ENCODE measurements at regions of chr15 and their contacts with region 1.

Region 1: GRCh38 chr15:72231066-72231846 is at the start of gene PKM:
- DNase-seq: peak; percentile 80 to 98 (median 89)
- ATAC-seq: peak; percentile 32
- H3K4me3 ChIP-seq: peak within 1 kb of the TSS; percentile 96
- H3K4me3 Mint-ChIP-seq: peak within 1 kb of the TSS; percentile 98
- H3K27ac ChIP-seq: peak within 1 kb of the TSS; percentile 78 to 92
- H3K27ac Mint-ChIP-seq: peak within 1 kb of the TSS; percentile 93
- H3K4me1 ChIP-seq: peaks cover 52% of the 10 kb centered on the region
- H3K4me1 Mint-ChIP-seq: peaks cover 58% of the 10 kb centered on the region
- H3K27me3 ChIP-seq: no peaks in the 10 kb centered on the region
- H3K27me3 Mint-ChIP-seq: no peaks in the 10 kb centered on the region
- CTCF ChIP-seq: no peak
- total RNA-seq, gene PKM: 202 to 203 TPM

Region 2: DNA sequence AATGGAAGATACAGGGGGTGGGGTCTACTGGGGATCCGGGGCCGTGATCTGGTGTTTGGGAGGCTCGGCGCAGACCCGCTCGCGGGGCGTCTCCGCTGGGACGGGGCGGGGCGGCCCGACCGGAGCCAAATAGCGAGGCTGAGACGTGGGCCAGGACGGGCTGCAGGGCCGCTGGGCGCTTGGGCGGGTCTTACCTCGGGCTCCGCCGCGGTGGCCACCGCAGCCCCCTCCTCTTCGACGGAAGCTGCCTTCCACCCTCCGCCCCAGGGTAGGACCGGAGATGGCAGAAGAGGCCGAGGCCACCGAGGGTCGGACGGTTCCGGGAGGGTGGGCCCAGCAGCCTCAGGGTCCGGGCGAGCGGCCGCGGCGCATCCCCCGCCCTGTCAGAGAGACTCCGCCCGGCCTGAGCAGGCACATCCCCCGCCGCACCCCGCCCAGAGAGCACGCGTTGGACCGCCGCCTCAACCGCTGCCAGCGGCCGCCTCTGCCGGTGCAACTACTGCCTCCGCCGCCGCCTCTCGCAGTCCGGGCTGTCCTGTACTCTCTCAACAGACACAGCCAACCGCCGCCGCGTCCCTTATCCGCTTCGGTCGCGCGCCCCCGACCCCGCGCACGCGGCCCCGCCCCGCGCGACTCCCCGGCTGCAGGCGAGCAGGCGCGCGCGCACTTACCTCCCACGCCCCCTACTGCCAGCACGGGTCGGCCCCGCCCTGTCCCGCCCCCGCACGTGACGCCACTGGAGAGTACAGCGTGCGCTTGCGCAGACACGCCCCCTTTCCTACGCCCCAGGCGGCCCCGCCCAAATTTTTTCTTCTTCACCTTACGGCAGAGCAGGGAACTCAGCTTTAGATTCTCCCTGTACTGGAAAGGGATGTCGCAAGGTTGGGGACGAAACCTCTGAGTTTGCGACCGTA is 113.5 kb before region 1 on chr15 and contains the start of gene MYO9A:
- CTCF ChIA-PET with region 1: no interaction called
- POLR2A ChIA-PET with region 1: interaction called, 8 read pairs
- intact Hi-C with region 1: loop called (anchors 2 kb)
- DNase-seq: peak; percentile 97 to 99 (median 99)
- ATAC-seq: peak; percentile 79
- H3K4me3 ChIP-seq: peak within 1 kb of the TSS; percentile 74
- H3K4me3 Mint-ChIP-seq: peak within 1 kb of the TSS; percentile 98
- H3K27ac ChIP-seq: peak within 1 kb of the TSS; percentile 91 to 92
- H3K27ac Mint-ChIP-seq: peak within 1 kb of the TSS; percentile 97
- H3K4me1 ChIP-seq: peaks cover 15% of the 10 kb centered on the region
- H3K4me1 Mint-ChIP-seq: peaks cover 60% of the 10 kb centered on the region
- H3K27me3 ChIP-seq: no peaks in the 10 kb centered on the region
- H3K27me3 Mint-ChIP-seq: no peaks in the 10 kb centered on the region
- CTCF ChIP-seq: no peak
- total RNA-seq, gene MYO9A: 23.4 to 29.1 TPM

Region 3: DNA sequence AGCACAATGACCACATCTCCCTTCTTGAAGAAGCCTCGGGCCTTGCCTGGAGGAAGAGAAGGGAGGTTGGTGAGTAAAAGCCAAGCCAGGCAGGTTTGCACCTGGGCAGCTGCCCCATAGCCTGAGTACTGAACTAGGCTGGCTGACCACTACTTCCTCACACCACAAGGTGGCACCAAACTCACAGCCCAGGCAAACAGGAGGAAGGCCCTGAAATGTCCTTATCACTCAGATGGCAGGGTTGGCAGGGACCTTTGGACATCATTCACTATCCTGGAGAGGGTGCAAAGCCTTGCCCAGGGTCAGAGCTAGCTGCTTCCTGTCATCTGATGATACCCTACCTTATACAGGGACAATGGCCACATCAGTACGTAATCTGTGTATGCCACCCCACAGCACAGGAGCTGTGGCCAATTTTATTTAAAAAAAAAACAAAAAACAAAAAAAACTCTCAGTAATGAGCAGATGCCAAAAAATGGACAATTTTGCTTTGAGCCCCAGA is 31.5 kb before region 1 on chr15:
- CTCF ChIA-PET with region 1: interaction called, 14 read pairs
- POLR2A ChIA-PET with region 1: interaction called, 29 read pairs
- intact Hi-C with region 1: loop called in 1 of 2 experiments (anchors 1 kb)
- DNase-seq: peak; percentile 61 to 86 (median 70)
- ATAC-seq: peak; percentile 87
- H3K4me3 ChIP-seq: no peak overlapping the region
- H3K4me3 Mint-ChIP-seq: peak overlapping the region; percentile 4
- H3K27ac ChIP-seq: no peak overlapping the region
- H3K27ac Mint-ChIP-seq: no peak overlapping the region
- H3K4me1 ChIP-seq: peaks cover 15% of the 10 kb centered on the region
- H3K4me1 Mint-ChIP-seq: peaks cover 9% of the 10 kb centered on the region
- H3K27me3 ChIP-seq: peaks cover 11 to 13% of the 10 kb centered on the region in 2 experiments
- H3K27me3 Mint-ChIP-seq: peaks cover 17% of the 10 kb centered on the region
- CTCF ChIP-seq: peak; percentile 91

Region 4: DNA sequence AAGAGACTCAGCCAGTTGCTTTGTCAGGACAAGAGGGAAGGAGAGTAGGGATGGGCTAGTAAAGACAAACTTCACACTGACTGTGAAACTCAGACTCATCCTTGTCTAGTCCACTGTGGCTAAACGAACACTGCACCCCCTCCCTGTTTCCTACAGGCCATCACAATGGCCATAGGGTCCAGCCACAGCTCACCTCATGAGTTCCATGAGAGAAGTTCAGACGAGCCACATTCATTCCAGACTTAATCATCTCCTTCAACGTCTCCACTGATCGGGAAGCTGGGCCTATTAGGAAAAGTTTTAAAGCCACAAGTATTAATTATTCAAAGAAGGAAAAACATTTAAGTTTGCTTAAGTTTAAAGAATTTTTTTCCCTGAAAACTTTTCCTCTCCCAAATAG is 14.0 kb before region 1 on chr15:
- CTCF ChIA-PET with region 1: interaction called, 16 read pairs
- POLR2A ChIA-PET with region 1: interaction called, 8 read pairs
- intact Hi-C with region 1: no loop called
- DNase-seq: no peak
- ATAC-seq: no peak
- H3K4me3 ChIP-seq: no peak overlapping the region
- H3K4me3 Mint-ChIP-seq: no peak overlapping the region
- H3K27ac ChIP-seq: no peak overlapping the region
- H3K27ac Mint-ChIP-seq: no peak overlapping the region
- H3K4me1 ChIP-seq: peaks cover 13% of the 10 kb centered on the region
- H3K4me1 Mint-ChIP-seq: peaks cover 29% of the 10 kb centered on the region
- H3K27me3 ChIP-seq: no peaks in the 10 kb centered on the region
- H3K27me3 Mint-ChIP-seq: no peaks in the 10 kb centered on the region
- CTCF ChIP-seq: no peak

Region 5: DNA sequence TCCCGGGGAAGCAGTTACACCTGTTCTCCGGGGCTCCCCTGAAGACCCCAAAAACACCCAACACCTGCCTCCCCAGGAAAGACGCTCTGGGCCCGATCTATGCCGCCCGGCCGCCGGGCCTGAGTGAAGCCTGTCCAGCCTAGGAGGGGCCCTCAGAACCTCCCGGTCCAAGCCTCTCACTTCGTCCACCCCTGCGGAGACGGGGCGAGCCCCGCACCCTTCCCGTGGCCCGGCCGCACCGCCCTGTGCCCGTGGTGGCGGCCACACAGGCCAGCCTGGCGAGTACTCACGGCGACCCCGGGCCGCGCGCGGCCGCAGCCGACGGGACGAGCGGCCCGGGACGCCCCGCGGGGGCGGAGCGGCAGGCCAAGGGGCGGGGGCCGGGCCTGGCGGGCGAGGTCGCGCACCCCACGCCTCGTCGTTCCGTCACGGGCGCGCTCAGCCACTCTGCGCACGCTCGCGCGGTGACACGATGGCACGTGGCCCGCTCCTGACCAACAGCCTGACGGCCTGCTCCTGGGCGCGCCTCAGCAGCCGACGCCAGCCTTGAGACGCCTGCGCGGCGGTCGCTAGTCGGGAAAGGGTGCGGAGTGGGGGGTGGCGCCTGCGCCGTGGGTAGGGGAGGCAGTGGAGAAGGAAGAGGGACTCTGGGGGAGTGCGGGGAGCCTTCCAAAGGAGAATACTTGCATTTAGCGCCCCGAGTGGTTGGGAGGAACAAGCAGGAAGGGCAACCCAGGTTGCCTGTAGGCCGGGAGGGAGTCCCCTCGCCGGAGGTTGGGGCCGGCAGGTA is 41.2 kb after region 1 on chr15 and contains the start of gene PARP6:
- CTCF ChIA-PET with region 1: interaction called, 15 read pairs
- POLR2A ChIA-PET with region 1: interaction called, 22 read pairs
- intact Hi-C with region 1: loop called (anchors 1 to 2 kb)
- DNase-seq: peak; percentile 95 to 100 (median 98)
- ATAC-seq: peak; percentile 94
- H3K4me3 ChIP-seq: peak within 1 kb of the TSS; percentile 89
- H3K4me3 Mint-ChIP-seq: peak within 1 kb of the TSS; percentile 92
- H3K27ac ChIP-seq: peak within 1 kb of the TSS; percentile 76 to 79
- H3K27ac Mint-ChIP-seq: peak within 1 kb of the TSS; percentile 93
- H3K4me1 ChIP-seq: peaks cover 25% of the 10 kb centered on the region
- H3K4me1 Mint-ChIP-seq: peaks cover 47% of the 10 kb centered on the region
- H3K27me3 ChIP-seq: no peaks in the 10 kb centered on the region
- H3K27me3 Mint-ChIP-seq: no peaks in the 10 kb centered on the region
- CTCF ChIP-seq: peak; percentile 80
- total RNA-seq, gene PARP6: 128 to 133 TPM

Region 6: DNA sequence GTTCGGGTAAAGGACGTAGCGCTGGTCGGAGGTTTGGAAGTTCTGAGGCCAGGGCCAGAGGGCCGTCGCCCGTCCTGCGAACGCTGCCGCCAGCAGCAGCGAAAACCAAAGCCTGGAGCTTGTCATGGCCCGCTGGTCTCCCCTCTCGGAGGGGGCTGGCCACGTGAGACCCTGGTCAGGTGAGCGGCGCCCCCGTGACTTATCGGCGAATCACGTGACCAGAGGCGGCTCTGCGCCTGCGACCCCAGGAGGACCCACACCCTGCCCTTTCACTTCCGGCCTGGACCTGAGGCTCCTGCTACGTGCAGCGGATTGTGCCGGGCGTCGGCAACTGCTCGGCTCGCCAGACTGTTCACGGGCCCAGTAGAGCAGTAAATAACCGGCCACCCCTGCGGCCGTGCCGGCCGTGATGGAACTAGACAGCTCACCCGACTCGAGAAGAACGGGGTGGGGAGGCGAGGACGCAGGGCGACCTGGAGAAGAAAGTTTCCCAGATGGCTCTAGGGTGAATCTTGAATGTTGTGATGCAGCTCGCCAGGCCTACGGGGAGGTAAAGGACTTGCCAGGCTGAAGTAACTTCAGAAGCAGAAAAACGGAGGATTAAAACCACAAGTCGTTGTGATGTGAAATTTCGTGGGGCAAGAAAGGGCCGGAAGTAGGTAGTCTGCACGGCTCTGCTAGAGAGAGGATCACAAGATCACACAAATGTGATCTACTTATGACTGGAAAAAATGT is 144.8 kb after region 1 on chr15 and contains the start of gene HEXA:
- CTCF ChIA-PET with region 1: interaction called, 4 read pairs
- POLR2A ChIA-PET with region 1: interaction called, 19 read pairs
- intact Hi-C with region 1: loop called (anchors 5 to 10 kb)
- DNase-seq: peak; percentile 89 to 97 (median 94)
- ATAC-seq: peak; percentile 68
- H3K4me3 ChIP-seq: peak within 1 kb of the TSS; percentile 87
- H3K4me3 Mint-ChIP-seq: peak within 1 kb of the TSS; percentile 94
- H3K27ac ChIP-seq: peak within 1 kb of the TSS; percentile 76 to 86
- H3K27ac Mint-ChIP-seq: peak within 1 kb of the TSS; percentile 96
- H3K4me1 ChIP-seq: peaks cover 28% of the 10 kb centered on the region
- H3K4me1 Mint-ChIP-seq: peaks cover 57% of the 10 kb centered on the region
- H3K27me3 ChIP-seq: no peaks in the 10 kb centered on the region
- H3K27me3 Mint-ChIP-seq: peaks cover 9% of the 10 kb centered on the region
- CTCF ChIP-seq: no peak
- total RNA-seq, gene HEXA: 66.3 to 66.9 TPM

Region 7: GRCh38 chr15:72685925-72686794 is 454.9 kb after region 1 on chr15 and contains the starts of genes BBS4 and HIGD2B:
- CTCF ChIA-PET with region 1: no interaction called
- POLR2A ChIA-PET with region 1: interaction called, 4 read pairs
- intact Hi-C with region 1: loop called in 1 of 2 experiments (anchors 5 kb)
- DNase-seq: peak; percentile 71 to 93 (median 82)
- ATAC-seq: peak; percentile 92
- H3K4me3 ChIP-seq: peak within 1 kb of the TSS; percentile 75
- H3K4me3 Mint-ChIP-seq: peak within 1 kb of the TSS; percentile 94
- H3K27ac ChIP-seq: peak within 1 kb of the TSS; percentile 77 to 81
- H3K27ac Mint-ChIP-seq: peak within 1 kb of the TSS; percentile 96
- H3K4me1 ChIP-seq: peaks cover 17% of the 10 kb centered on the region
- H3K4me1 Mint-ChIP-seq: peaks cover 18% of the 10 kb centered on the region
- H3K27me3 ChIP-seq: no peaks in the 10 kb centered on the region
- H3K27me3 Mint-ChIP-seq: no peaks in the 10 kb centered on the region
- CTCF ChIP-seq: no peak
- total RNA-seq, gene BBS4: 8.6 to 12.8 TPM
- total RNA-seq, gene HIGD2B: 0.28 TPM in 1 of 2 experiments, not detected in the other

Region 8: GRCh38 chr15:72770673-72771328 is 539.5 kb after region 1 on chr15:
- CTCF ChIA-PET with region 1: no interaction called
- POLR2A ChIA-PET with region 1: no interaction called
- intact Hi-C with region 1: no loop called
- DNase-seq: no peak
- ATAC-seq: no peak
- H3K4me3 ChIP-seq: no peak overlapping the region
- H3K4me3 Mint-ChIP-seq: no peak overlapping the region
- H3K27ac ChIP-seq: no peak overlapping the region
- H3K27ac Mint-ChIP-seq: no peak overlapping the region
- H3K4me1 ChIP-seq: no peaks in the 10 kb centered on the region
- H3K4me1 Mint-ChIP-seq: peaks cover 27% of the 10 kb centered on the region
- H3K27me3 ChIP-seq: no peaks in the 10 kb centered on the region
- H3K27me3 Mint-ChIP-seq: no peaks in the 10 kb centered on the region
- CTCF ChIP-seq: no peak

Region 9: GRCh38 chr15:73082812-73083211 is 851.6 kb after region 1 on chr15:
- CTCF ChIA-PET with region 1: no interaction called
- POLR2A ChIA-PET with region 1: no interaction called
- intact Hi-C with region 1: no loop called
- DNase-seq: no peak
- ATAC-seq: no peak
- H3K4me3 ChIP-seq: no peak overlapping the region
- H3K4me3 Mint-ChIP-seq: no peak overlapping the region
- H3K27ac ChIP-seq: no peak overlapping the region
- H3K27ac Mint-ChIP-seq: no peak overlapping the region
- H3K4me1 ChIP-seq: no peaks in the 10 kb centered on the region
- H3K4me1 Mint-ChIP-seq: peaks cover 7% of the 10 kb centered on the region
- H3K27me3 ChIP-seq: no peaks in the 10 kb centered on the region
- H3K27me3 Mint-ChIP-seq: peaks cover 10% of the 10 kb centered on the region
- CTCF ChIP-seq: no peak

Measured in CD4-positive, alpha-beta T cell (primary cell).